ENCODE measurements at regions of chr12 and their contacts with region 1.

Region 1: DNA sequence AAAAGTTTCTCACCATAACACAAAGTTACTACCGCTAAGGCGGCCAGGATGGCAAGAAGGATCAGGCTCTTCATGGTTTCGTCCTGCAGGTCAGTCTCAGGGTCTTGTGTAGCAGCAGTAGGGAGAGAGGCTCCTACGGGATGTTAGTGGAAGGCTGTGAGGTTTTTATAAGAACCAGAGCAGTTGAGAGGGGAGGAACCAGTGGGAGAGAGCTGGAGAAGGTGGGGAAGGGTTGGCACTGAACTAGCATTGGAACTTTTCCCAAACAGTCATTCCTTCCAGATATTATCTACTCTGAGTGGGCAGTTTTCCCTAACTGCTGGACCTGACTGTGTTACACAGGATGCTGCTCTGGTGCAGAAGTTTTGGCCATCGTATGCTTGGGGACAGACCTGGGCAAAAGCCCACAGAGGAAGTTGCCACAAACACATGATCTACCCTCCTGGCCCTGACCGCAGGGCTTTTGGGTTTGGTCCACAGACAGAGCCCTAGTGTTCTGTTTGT is at the start of gene MGP:
- DNase-seq: peak; percentile 64 to 84 (median 77)
- ATAC-seq: peak; percentile 92 to 94
- H3K4me3 ChIP-seq: peak within 1 kb of the TSS; percentile 66
- H3K27ac ChIP-seq: peak within 1 kb of the TSS; percentile 95
- H3K4me1 ChIP-seq: peaks cover 6% of the 10 kb centered on the region
- H3K27me3 ChIP-seq: no peaks in the 10 kb centered on the region
- total RNA-seq, gene MGP: 660 to 1,578 (median 1,064) TPM

Region 2: DNA sequence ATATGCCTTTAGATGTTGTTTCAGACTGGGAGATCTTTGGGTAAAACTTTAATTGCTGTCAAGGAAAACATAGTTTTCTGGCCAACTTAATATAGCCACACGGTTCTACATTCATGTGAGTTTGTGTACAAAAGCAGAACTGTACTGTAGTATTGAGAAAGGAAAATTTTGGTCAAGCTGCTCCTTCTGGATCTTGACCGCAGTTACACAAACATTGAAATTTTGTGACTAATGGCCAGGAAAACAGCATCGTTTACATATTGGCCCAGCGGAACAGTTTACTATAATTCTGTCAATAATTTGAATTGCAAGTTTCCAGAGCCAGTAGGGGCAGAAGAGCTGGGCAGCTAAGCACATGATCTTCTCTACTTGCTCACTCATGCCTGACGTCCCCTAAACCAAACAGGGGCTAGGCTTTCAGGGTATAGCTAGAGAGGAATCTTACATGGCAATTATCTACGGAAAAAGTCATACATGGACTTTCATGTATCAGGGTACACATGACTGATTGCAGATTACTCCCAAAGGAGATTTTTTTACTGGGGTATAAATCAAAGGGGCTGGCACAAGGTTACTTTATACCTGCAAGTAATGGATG is 31.1 kb before region 1 on chr12:
- intact Hi-C with region 1: loop called in 3 of 4 experiments (anchors 5 kb)
- DNase-seq: no peak
- ATAC-seq: no peak
- H3K4me3 ChIP-seq: no peak overlapping the region
- H3K27ac ChIP-seq: no peak overlapping the region
- H3K4me1 ChIP-seq: peaks cover under 1% of the 10 kb centered on the region
- H3K27me3 ChIP-seq: no peaks in the 10 kb centered on the region

Measured in right cardiac atrium (tissue), 5 donors.